ENCODE measurements at regions of chr11 and their contacts with region 1.

Region 1: GRCh38 chr11:65662799-65663638 is at the start of gene RELA:
- DNase-seq: peak; percentile 93 to 94 (median 94)
- ATAC-seq: peak; percentile 92
- H3K4me3 ChIP-seq: peak within 1 kb of the TSS; percentile 92
- H3K27ac ChIP-seq: peak within 1 kb of the TSS; percentile 87
- H3K4me1 ChIP-seq: peaks cover 7 to 20% of the 10 kb centered on the region in 2 experiments; a peak in 4 of 5 replicates
- H3K27me3 ChIP-seq: no peaks in the 10 kb centered on the region
- CTCF ChIP-seq: no peak
- EP300 ChIP-seq: no peak
- POLR2A ChIP-seq: peak; percentile 81
- RAD21 ChIP-seq: no peak
- polyA plus RNA-seq, gene RELA: 6.0 to 6.4 TPM

Region 2: DNA sequence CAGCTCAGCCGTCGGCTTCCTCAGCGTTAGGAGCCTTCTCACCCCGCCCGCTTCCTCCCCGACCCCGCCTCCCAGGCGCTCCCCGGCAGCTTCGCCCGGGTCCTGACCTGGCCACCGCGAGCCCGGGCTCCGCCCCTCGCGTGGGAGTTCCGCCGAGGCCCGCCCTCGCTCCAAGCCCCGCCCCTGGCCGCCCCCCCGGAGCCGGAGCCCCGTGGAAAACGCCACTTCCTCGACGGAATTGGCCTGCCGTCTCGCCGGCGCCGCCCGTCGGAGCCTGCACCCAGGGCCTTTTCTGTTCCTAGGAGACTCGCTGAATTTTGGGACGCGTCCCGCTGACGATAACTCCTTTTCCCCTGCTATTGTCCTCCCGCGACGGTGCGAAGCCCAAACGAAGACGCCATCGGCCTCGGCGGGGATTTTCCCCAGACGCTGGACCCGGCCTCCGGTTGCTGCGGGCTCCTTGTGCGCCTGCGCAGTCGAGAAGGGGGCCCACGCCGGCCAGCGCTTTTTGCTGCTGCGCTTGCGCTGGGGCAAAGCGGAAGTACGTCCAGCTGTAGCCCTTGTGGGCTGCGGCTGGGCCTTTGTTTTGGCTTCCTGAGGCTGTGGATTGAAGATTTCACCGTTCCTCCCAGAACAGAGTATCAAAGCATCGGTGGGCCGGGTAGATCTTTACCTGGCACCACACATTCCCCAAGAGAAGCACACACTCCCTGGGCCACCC is 10.3 kb before region 1 on chr11:
- CTCF ChIA-PET with region 1: no interaction called
- POLR2A ChIA-PET with region 1: interaction called, 32 read pairs
- in situ Hi-C with region 1: no loop called
- intact Hi-C with region 1: no loop called
- DNase-seq: peak; percentile 95 to 99 (median 98)
- ATAC-seq: peak; percentile 93
- H3K4me3 ChIP-seq: peak overlapping the region; percentile 46
- H3K27ac ChIP-seq: peak overlapping the region; percentile 92
- H3K4me1 ChIP-seq: peaks cover 29 to 55% of the 10 kb centered on the region in 2 experiments
- H3K27me3 ChIP-seq: no peaks in the 10 kb centered on the region
- CTCF ChIP-seq: no peak
- EP300 ChIP-seq: no peak
- POLR2A ChIP-seq: peak; percentile 88
- RAD21 ChIP-seq: no peak; a peak in 1 of 4 replicates

Region 3: GRCh38 chr11:65739022-65739421 is 76.0 kb after region 1 on chr11:
- CTCF ChIA-PET with region 1: no interaction called
- POLR2A ChIA-PET with region 1: no interaction called
- in situ Hi-C with region 1: no loop called
- intact Hi-C with region 1: no loop called
- DNase-seq: no peak
- ATAC-seq: no peak
- H3K4me3 ChIP-seq: no peak overlapping the region
- H3K27ac ChIP-seq: no peak overlapping the region
- H3K4me1 ChIP-seq: peaks cover 4 to 7% of the 10 kb centered on the region in 2 experiments; a peak in 3 of 5 replicates
- H3K27me3 ChIP-seq: peaks cover 0 to 9% of the 10 kb centered on the region in 2 experiments; a peak in 2 of 5 replicates
- CTCF ChIP-seq: no peak
- EP300 ChIP-seq: no peak
- POLR2A ChIP-seq: no peak
- RAD21 ChIP-seq: no peak

Measured in K562 (cell line).